Calu3 (cell line): ENCODE measurements at regions of chr15 and their contacts with region 1.

Region 1: GRCh38 chr15:91032919-91033803 is 10.8 kb upstream of the VPS33B start:
- DNase-seq: peak; percentile 94
- H3K4me3 Mint-ChIP-seq: peak overlapping the region; percentile 13
- H3K27ac Mint-ChIP-seq: no peak overlapping the region
- H3K4me1 Mint-ChIP-seq: peaks cover 11% of the 10 kb centered on the region
- H3K27me3 Mint-ChIP-seq: peaks cover 43% of the 10 kb centered on the region
- CTCF ChIP-seq: peak; percentile 73

Region 2: GRCh38 chr15:90954712-90955671 is 78.2 kb before region 1 on chr15 and contains the start of gene RCCD1:
- CTCF ChIA-PET with region 1: interaction called, 23 read pairs
- intact Hi-C with region 1: loop called (anchors 5 kb)
- DNase-seq: peak; percentile 97
- H3K4me3 Mint-ChIP-seq: peak within 1 kb of the TSS; percentile 92
- H3K27ac Mint-ChIP-seq: peak within 1 kb of the TSS; percentile 78
- H3K4me1 Mint-ChIP-seq: no peaks in the 10 kb centered on the region
- H3K27me3 Mint-ChIP-seq: no peaks in the 10 kb centered on the region
- CTCF ChIP-seq: no peak
- total RNA-seq, gene RCCD1: 39.3 and 42.6 TPM in 2 replicates